SK-N-SH (cell line): ENCODE measurements at regions of chr4 and their contacts with region 1.

Region 1: GRCh38 chr4:154551872-154552686 is 1.9 kb upstream of the PLRG1 start:
- DNase-seq: peak; percentile 47
- H3K4me3 ChIP-seq: no peak overlapping the region
- H3K27ac ChIP-seq: no peak overlapping the region
- H3K4me1 ChIP-seq: peaks cover 0 to 8% of the 10 kb centered on the region in 2 experiments; a peak in 2 of 4 replicates
- H3K27me3 ChIP-seq: peaks cover 5% of the 10 kb centered on the region; the same call in 1 of the 2 replicates
- CTCF ChIP-seq: peak; percentile 82
- EP300 ChIP-seq: no peak
- RAD21 ChIP-seq: peak; percentile 83

Region 2: GRCh38 chr4:154610582-154610981 is 58.5 kb after region 1 on chr4:
- CTCF ChIA-PET with region 1: interaction called, 11 read pairs
- POLR2A ChIA-PET with region 1: no interaction called
- DNase-seq: no peak
- H3K4me3 ChIP-seq: no peak overlapping the region
- H3K27ac ChIP-seq: no peak overlapping the region
- H3K4me1 ChIP-seq: no peaks in the 10 kb centered on the region
- H3K27me3 ChIP-seq: 0 out of 2 replicates have a peak, but pooled peaks cover 5% of the 10 kb centered on the region
- CTCF ChIP-seq: no peak
- EP300 ChIP-seq: no peak
- RAD21 ChIP-seq: no peak

Region 3: GRCh38 chr4:154618708-154619315 is 66.7 kb after region 1 on chr4:
- CTCF ChIA-PET with region 1: interaction called, 60 read pairs
- POLR2A ChIA-PET with region 1: no interaction called
- DNase-seq: peak; percentile 39
- H3K4me3 ChIP-seq: peak overlapping the region in 1 of 2 experiments; percentile 30; a peak in 1 of 4 replicates
- H3K27ac ChIP-seq: no peak overlapping the region
- H3K4me1 ChIP-seq: no peaks in the 10 kb centered on the region
- H3K27me3 ChIP-seq: no peaks in the 10 kb centered on the region; the same call in 1 of the 2 replicates
- CTCF ChIP-seq: peak; percentile 74
- EP300 ChIP-seq: no peak
- RAD21 ChIP-seq: peak; percentile 60

Region 4: GRCh38 chr4:154626793-154627484 is 74.9 kb after region 1 on chr4:
- CTCF ChIA-PET with region 1: interaction called, 15 read pairs
- POLR2A ChIA-PET with region 1: interaction called, 3 read pairs
- DNase-seq: peak; percentile 79
- H3K4me3 ChIP-seq: peak overlapping the region; percentile 3 to 43; a peak in 2 of 4 replicates
- H3K27ac ChIP-seq: no peak overlapping the region
- H3K4me1 ChIP-seq: no peaks in the 10 kb centered on the region; a peak in 1 of 4 replicates
- H3K27me3 ChIP-seq: peaks cover 19% of the 10 kb centered on the region; the same call in 1 of the 2 replicates
- CTCF ChIP-seq: peak; percentile 47
- EP300 ChIP-seq: no peak
- RAD21 ChIP-seq: no peak

Region 5: GRCh38 chr4:154642373-154643009 is 90.4 kb after region 1 on chr4:
- CTCF ChIA-PET with region 1: no interaction called
- POLR2A ChIA-PET with region 1: no interaction called
- DNase-seq: no peak
- H3K4me3 ChIP-seq: no peak overlapping the region
- H3K27ac ChIP-seq: no peak overlapping the region
- H3K4me1 ChIP-seq: no peaks in the 10 kb centered on the region
- H3K27me3 ChIP-seq: no peaks in the 10 kb centered on the region; the same call in 1 of the 2 replicates
- CTCF ChIP-seq: no peak
- EP300 ChIP-seq: no peak
- RAD21 ChIP-seq: no peak